Left ventricle myocardium inferior (tissue), 1 donor: ENCODE measurements at regions of chr18 and their contacts with region 1.

Region 1: DNA sequence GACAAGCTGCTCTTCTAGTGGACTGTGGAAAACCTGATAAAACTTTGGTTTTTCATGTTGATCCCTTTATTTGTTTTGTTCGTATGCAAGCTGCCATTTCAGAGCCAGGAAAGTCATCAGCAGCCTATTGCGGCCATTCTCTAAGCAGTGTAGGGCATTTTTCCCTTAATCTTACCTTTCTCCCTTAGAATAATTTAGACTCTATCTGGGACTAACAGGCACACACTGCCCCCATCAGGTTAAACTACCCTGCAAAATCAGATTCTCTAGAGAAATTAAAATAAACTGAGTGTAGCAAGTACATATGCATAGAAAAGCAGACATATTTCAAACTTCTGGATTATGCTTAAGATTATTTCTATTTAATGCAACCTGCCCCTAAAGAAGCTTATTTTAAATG is 347.5 kb downstream of the METTL4 start:
- DNase-seq: no peak
- H3K4me3 ChIP-seq: peak overlapping the region; percentile 43
- H3K27ac ChIP-seq: no peak overlapping the region
- H3K4me1 ChIP-seq: no peaks in the 10 kb centered on the region
- H3K27me3 ChIP-seq: peaks cover 6% of the 10 kb centered on the region
- CTCF ChIP-seq: peak; percentile 70

Region 2: GRCh38 chr18:1585879-1586488 is 637.9 kb before region 1 on chr18:
- intact Hi-C with region 1: loop called (anchors 10 kb)
- DNase-seq: no peak
- H3K4me3 ChIP-seq: no peak overlapping the region
- H3K27ac ChIP-seq: no peak overlapping the region
- H3K4me1 ChIP-seq: no peaks in the 10 kb centered on the region
- H3K27me3 ChIP-seq: peaks cover 26% of the 10 kb centered on the region
- CTCF ChIP-seq: peak; percentile 64

Region 3: GRCh38 chr18:2104620-2105462 is 119.0 kb before region 1 on chr18:
- intact Hi-C with region 1: loop called (anchors 10 kb)
- DNase-seq: peak; percentile 38
- H3K4me3 ChIP-seq: no peak overlapping the region
- H3K27ac ChIP-seq: no peak overlapping the region
- H3K4me1 ChIP-seq: no peaks in the 10 kb centered on the region
- H3K27me3 ChIP-seq: peaks cover 3% of the 10 kb centered on the region
- CTCF ChIP-seq: peak; percentile 79